Activated naive CD4-positive, alpha-beta T cell treated with anti-CD3 and anti-CD28 coated beads for 36 hours (primary cell): ENCODE measurements at regions of chr2 and their contacts with region 1.

Region 1: GRCh38 chr2:30208452-30208851 is 22.9 kb upstream of the LBH start:
- DNase-seq: peak; percentile 51
- H3K4me3 Mint-ChIP-seq: no peak overlapping the region
- H3K27ac Mint-ChIP-seq: no peak overlapping the region
- H3K4me1 Mint-ChIP-seq: peaks cover 15% of the 10 kb centered on the region
- H3K27me3 Mint-ChIP-seq: no peaks in the 10 kb centered on the region

Region 2: DNA sequence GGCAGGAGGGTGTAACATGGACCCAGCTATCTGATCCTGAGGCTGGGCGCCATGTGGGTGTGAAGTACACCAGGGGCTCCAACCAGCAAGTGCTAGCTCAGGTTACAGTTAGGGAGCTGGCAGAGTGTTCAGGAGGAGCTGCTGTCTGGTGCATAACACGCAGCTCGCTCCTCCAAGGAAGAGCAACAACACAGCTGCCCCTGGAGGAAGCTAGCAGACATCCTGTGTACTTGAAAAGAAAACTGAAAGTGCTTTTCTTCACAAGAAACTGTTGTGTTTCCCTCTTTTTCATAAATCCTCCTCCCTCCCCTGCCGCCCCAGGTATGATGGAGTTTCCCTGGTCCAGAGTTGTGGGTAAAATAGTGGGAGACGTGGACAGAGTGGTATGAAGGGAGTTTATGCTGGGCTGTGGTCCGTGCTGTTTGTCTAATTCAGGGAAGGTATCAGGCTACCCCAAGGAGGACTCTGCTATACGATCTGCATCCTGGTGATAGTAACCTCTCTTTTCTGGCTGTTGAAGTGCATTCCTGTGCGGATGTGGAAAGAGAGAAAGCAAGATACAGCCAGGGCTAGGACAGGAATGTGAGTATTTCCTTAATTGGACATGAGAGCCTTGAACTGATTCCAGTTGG is 16.8 kb after region 1 on chr2:
- CTCF ChIA-PET with region 1: interaction called, 97 read pairs
- intact Hi-C with region 1: loop called (anchors 1 kb)
- DNase-seq: peak; percentile 60
- H3K4me3 Mint-ChIP-seq: peak overlapping the region; percentile 81
- H3K27ac Mint-ChIP-seq: peak overlapping the region; percentile 87
- H3K4me1 Mint-ChIP-seq: peaks cover 64% of the 10 kb centered on the region
- H3K27me3 Mint-ChIP-seq: peaks cover 3% of the 10 kb centered on the region

Region 3: GRCh38 chr2:30231212-30231995 is 23.0 kb after region 1 on chr2 and contains the start of gene LBH:
- CTCF ChIA-PET with region 1: interaction called, 97 read pairs
- intact Hi-C with region 1: no loop called
- DNase-seq: peak; percentile 90
- H3K4me3 Mint-ChIP-seq: peak within 1 kb of the TSS; percentile 83
- H3K27ac Mint-ChIP-seq: peak within 1 kb of the TSS; percentile 74
- H3K4me1 Mint-ChIP-seq: peaks cover 56% of the 10 kb centered on the region
- H3K27me3 Mint-ChIP-seq: peaks cover 3% of the 10 kb centered on the region
- total RNA-seq, gene LBH: 71.4 to 75.3 TPM

Region 4: DNA sequence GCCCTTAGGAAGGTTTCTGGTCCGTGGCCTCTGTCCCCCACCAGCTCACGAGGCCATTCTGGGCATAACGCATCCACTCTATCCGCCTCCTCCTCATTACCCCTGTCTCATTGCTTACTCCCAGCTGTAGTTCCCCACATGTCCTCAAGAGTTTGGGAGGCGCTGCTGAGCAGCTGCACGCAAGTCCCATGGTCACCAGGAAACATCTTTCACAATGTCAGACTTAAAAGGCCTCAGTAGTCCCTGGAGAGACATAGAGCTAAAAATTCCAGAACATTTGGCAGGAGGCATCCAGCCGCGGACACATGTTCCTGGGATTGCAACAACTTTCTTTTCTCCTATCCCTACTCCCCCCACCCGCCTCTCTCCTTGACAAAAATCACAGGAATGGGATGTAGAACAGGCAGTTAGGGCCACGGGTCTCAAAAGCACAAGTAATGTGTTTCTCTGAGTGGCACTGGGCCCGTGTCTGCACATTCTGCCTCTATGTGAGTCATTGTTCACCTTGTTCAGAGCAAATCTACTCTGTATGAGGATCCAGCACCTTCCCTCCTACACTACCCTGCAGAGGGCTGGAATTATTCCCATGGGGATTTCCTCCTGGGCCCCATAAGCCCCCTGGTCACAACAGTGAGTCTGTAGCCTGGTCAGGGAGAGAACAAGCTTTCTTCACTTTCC is 31.0 kb after region 1 on chr2:
- CTCF ChIA-PET with region 1: interaction called, 59 read pairs
- intact Hi-C with region 1: no loop called
- DNase-seq: peak; percentile 86
- H3K4me3 Mint-ChIP-seq: peak overlapping the region; percentile 45
- H3K27ac Mint-ChIP-seq: peak overlapping the region; percentile 79
- H3K4me1 Mint-ChIP-seq: peaks cover 93% of the 10 kb centered on the region
- H3K27me3 Mint-ChIP-seq: no peaks in the 10 kb centered on the region

Region 5: DNA sequence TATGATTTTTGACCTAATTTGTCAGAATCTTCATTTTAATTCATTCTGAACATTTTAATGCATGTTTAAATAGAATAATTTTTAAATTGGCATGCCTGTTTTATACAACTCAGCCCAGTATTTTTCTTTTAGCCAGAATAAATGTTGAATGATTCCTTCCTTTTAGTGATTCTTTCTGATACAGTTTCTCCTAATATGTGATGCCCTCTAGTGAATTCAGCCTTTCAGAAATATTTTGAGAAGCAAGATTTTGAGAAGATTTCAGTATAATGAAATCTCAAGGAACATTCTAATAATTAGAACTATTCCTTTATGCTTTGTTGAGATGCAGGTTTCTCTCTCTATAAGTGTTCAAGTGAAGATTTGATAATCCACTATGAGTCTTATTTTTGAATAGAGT is 267.1 kb after region 1 on chr2:
- CTCF ChIA-PET with region 1: interaction called, 13 read pairs
- intact Hi-C with region 1: loop called (anchors 1 kb)
- DNase-seq: no peak
- H3K4me3 Mint-ChIP-seq: no peak overlapping the region
- H3K27ac Mint-ChIP-seq: no peak overlapping the region
- H3K4me1 Mint-ChIP-seq: peaks cover 33% of the 10 kb centered on the region
- H3K27me3 Mint-ChIP-seq: no peaks in the 10 kb centered on the region

Region 6: GRCh38 chr2:30686000-30686399 is 477.5 kb after region 1 on chr2:
- CTCF ChIA-PET with region 1: interaction called, 18 read pairs
- intact Hi-C with region 1: no loop called
- DNase-seq: no peak
- H3K4me3 Mint-ChIP-seq: no peak overlapping the region
- H3K27ac Mint-ChIP-seq: no peak overlapping the region
- H3K4me1 Mint-ChIP-seq: no peaks in the 10 kb centered on the region
- H3K27me3 Mint-ChIP-seq: no peaks in the 10 kb centered on the region

Region 7: DNA sequence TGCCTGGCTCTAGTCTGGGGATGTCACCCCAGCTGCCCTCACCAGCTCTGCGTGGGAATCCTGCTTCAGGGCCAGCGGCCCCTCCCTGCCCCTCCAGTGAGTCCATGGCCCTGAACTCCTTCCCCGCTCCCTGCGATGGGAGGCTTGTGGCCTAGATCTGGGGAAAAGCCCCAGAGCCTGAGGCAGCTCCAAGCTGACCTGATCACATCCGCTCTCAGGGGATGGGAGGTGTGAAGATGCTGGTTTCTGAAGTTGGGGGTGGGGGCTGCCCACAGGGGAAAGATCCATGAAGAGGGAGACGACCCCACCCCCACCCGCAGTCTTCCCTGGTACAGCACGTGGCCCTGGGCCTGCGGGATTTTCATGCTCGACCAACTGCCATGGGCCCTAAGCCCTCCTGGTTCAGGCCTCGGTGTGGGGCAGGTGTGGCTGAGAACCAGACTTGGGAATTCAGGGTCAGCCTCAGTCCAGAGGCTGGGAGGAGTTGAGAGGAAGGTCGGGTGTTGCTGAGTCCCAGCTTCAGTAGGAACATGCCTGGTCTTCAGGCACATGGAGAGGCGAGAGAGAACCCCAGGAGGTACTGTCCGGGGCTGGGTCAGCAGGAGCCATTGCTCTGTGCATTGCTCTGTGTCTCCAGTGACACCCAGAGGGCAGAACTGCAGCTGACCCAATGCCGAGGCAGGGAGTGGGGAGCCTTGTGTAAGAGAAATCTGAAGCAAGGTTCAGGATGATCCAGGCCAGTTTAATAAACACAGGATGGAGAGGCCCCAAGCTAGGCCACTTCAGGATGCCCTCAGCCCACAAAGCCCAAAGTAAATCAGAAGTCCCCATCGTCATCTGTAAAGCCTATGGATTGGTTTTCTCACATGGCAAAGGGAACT is 483.7 kb after region 1 on chr2:
- CTCF ChIA-PET with region 1: interaction called, 18 read pairs
- intact Hi-C with region 1: no loop called
- DNase-seq: peak; percentile 22
- H3K4me3 Mint-ChIP-seq: no peak overlapping the region
- H3K27ac Mint-ChIP-seq: no peak overlapping the region
- H3K4me1 Mint-ChIP-seq: no peaks in the 10 kb centered on the region
- H3K27me3 Mint-ChIP-seq: no peaks in the 10 kb centered on the region